Activated CD4-positive, alpha-beta memory T cell treated with anti-CD3 and anti-CD28 coated beads for 36 hours (primary cell): ENCODE measurements at regions of chr10 and their contacts with region 1.

Region 1: DNA sequence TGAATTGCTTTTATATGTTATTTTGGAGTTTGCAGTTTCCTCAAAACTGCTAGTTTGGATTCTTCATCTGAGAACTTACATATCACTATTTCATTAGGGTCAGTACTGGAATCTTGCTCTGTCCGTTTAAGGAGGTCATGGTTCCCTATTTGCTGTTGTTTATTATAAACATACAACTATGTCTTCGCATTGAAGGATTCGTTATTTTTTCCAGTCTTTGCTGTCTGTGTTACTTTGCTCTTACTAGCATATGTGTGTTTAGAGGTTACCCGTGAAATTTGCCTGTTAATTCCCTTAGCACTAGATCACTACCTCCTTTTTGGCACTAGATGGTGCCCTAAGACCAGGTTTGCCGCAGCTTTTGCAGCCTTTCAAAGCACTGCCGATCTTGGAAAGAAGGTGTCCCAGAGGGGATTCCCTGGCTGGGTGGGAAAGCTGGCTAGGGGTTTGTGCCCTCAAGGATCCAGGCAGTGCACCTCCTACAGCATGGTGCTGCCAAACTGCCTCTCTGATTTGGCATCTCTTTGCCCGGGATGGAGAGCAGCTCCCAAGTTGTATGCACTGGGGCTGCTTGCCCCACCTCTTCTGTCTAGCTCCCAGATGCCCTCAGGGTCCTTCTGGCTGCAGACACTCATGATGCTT is 103.1 kb upstream of the APBB1IP start:
- DNase-seq: peak; percentile 73
- H3K4me3 Mint-ChIP-seq: peak overlapping the region; percentile 67
- H3K27ac Mint-ChIP-seq: peak overlapping the region; percentile 36
- H3K4me1 Mint-ChIP-seq: peaks cover 6% of the 10 kb centered on the region
- H3K27me3 Mint-ChIP-seq: no peaks in the 10 kb centered on the region

Region 2: GRCh38 chr10:26251925-26252324 is 83.1 kb before region 1 on chr10:
- CTCF ChIA-PET with region 1: no interaction called
- POLR2A ChIA-PET with region 1: no interaction called
- intact Hi-C with region 1: no loop called
- DNase-seq: no peak
- H3K4me3 Mint-ChIP-seq: no peak overlapping the region
- H3K27ac Mint-ChIP-seq: no peak overlapping the region
- H3K4me1 Mint-ChIP-seq: no peaks in the 10 kb centered on the region
- H3K27me3 Mint-ChIP-seq: peaks cover 2% of the 10 kb centered on the region

Region 3: DNA sequence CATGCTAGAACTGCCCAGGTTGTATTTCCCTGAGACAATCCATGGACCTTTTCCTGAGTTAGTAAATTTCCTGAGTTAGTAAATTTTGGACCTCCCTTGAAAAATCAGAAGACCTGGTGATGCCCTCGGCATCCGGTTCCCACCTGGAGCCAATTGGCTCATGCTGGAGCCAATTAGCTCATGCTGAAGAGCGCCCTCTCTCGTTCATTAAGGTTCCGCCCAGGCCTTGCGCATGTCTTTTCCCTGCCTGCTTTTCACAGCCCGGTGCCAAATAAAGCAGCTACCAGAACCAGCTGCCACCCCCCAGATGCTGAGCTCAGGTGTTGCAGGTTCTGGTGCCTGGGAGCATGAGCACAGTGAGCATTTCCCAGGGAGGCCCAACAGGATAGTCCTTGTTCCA is 199.3 kb after region 1 on chr10:
- CTCF ChIA-PET with region 1: interaction called, 11 read pairs
- POLR2A ChIA-PET with region 1: no interaction called
- intact Hi-C with region 1: no loop called
- DNase-seq: peak; percentile 15
- H3K4me3 Mint-ChIP-seq: no peak overlapping the region
- H3K27ac Mint-ChIP-seq: no peak overlapping the region
- H3K4me1 Mint-ChIP-seq: no peaks in the 10 kb centered on the region
- H3K27me3 Mint-ChIP-seq: no peaks in the 10 kb centered on the region

Region 4: DNA sequence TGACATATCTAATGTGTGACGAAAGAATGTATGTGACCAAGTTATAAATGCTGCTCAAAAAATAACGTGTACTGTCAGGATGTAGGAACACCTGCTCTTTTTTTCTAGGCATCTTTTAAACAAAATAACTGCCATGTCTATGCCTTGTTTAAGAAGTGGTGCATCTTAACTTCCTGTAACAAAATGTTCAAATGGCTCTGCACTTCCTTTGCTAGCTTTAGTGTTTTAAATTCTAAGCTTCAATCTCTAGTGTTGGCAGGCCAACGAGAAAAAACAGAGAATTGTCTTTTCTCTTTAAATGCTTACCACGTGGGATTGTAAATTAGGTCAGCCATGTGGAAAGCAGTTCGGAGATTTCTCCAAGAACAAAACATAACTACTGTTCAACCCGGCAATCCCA is 347.9 kb after region 1 on chr10:
- CTCF ChIA-PET with region 1: interaction called, 5 read pairs
- POLR2A ChIA-PET with region 1: no interaction called
- intact Hi-C with region 1: loop called (anchors 5 kb)
- DNase-seq: no peak
- H3K4me3 Mint-ChIP-seq: no peak overlapping the region
- H3K27ac Mint-ChIP-seq: peak overlapping the region; percentile 57
- H3K4me1 Mint-ChIP-seq: peaks cover 19% of the 10 kb centered on the region
- H3K27me3 Mint-ChIP-seq: peaks cover 4% of the 10 kb centered on the region

Region 5: GRCh38 chr10:26725837-26726727 is 391.0 kb after region 1 on chr10:
- CTCF ChIA-PET with region 1: interaction called, 23 read pairs
- POLR2A ChIA-PET with region 1: no interaction called
- intact Hi-C with region 1: no loop called
- DNase-seq: peak; percentile 58
- H3K4me3 Mint-ChIP-seq: no peak overlapping the region
- H3K27ac Mint-ChIP-seq: no peak overlapping the region
- H3K4me1 Mint-ChIP-seq: peaks cover 4% of the 10 kb centered on the region
- H3K27me3 Mint-ChIP-seq: no peaks in the 10 kb centered on the region

Region 6: GRCh38 chr10:27155066-27155754 is 820.2 kb after region 1 on chr10 and contains the start of gene MASTL:
- CTCF ChIA-PET with region 1: no interaction called
- POLR2A ChIA-PET with region 1: no interaction called
- intact Hi-C with region 1: loop called (anchors 5 kb)
- DNase-seq: peak; percentile 96
- H3K4me3 Mint-ChIP-seq: peak within 1 kb of the TSS; percentile 97
- H3K27ac Mint-ChIP-seq: peak within 1 kb of the TSS; percentile 100
- H3K4me1 Mint-ChIP-seq: peaks cover 39% of the 10 kb centered on the region
- H3K27me3 Mint-ChIP-seq: no peaks in the 10 kb centered on the region
- total RNA-seq, gene MASTL: 44.2 to 50.4 TPM